Mammary epithelial cell (primary cell): ENCODE measurements at regions of chr19 and their contacts with region 1.

Region 1: GRCh38 chr19:47225746-47226425 is 5.1 kb downstream of the BBC3 start:
- DNase-seq: peak; percentile 77
- H3K4me3 ChIP-seq: peak overlapping the region in 1 of 3 experiments; percentile 40
- H3K27ac ChIP-seq: peak overlapping the region; percentile 60
- H3K4me1 ChIP-seq: peaks cover 43% of the 10 kb centered on the region
- H3K27me3 ChIP-seq: no peaks in the 10 kb centered on the region
- CTCF ChIP-seq: peak in 1 of 2 donors; percentile 20

Region 2: DNA sequence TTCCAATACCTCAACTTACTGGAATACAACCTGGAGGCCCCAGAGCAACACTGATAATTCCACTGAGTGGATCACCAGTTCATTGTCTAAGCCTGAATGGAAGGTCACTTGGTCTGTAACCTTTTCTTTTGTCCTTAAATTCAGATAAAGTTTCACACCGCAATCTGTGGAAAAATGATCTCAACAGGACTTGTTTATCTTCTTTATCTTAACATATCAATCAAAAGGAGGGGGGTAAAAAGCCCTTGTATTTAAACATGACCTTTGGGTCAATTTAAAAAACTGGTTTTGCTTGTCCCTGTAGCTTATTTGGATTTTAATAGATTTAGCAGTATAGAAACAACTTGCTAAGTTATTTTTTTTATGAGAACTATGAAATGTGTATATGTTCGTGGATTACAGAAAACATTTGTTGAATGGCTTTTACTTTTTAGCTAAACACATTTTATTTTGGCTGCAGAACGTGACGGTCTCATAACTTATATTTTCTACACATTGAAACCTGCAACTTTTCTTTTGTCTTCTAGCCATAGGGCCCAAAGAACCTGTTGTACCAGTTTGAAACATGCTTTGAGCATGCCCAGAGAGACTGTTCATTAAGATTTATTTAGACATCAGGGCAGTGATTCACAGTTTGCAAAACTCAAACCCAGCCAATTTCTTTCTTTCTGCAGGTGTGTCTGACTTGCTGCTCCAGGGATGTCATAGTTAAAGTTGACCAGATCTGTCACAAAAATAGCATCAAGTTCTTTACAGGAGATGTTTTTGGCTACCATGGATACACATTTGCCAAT is 73.5 kb before region 1 on chr19:
- CTCF ChIA-PET with region 1: no interaction called
- dilution Hi-C with region 1: no loop called
- in situ Hi-C with region 1: no loop called
- intact Hi-C with region 1: loop called (anchors 1 kb)
- DNase-seq: peak; percentile 89
- H3K4me3 ChIP-seq: no peak overlapping the region
- H3K27ac ChIP-seq: peak overlapping the region; percentile 11
- H3K4me1 ChIP-seq: peaks cover 28% of the 10 kb centered on the region
- H3K27me3 ChIP-seq: no peaks in the 10 kb centered on the region
- CTCF ChIP-seq: no peak